T-cell (primary cell): ENCODE measurements at regions of chr6 and their contacts with region 1.

Region 1: GRCh38 chr6:149368065-149368464 is 32.0 kb upstream of the SUMO4 start:
- DNase-seq: no peak
- ATAC-seq: no peak
- H3K4me3 ChIP-seq: no peak overlapping the region
- H3K4me3 Mint-ChIP-seq: no peak overlapping the region
- H3K27ac ChIP-seq: no peak overlapping the region
- H3K27ac Mint-ChIP-seq: no peak overlapping the region
- H3K4me1 ChIP-seq: peaks cover 10 to 57% of the 10 kb centered on the region in 2 experiments
- H3K4me1 Mint-ChIP-seq: peaks cover 27 to 50% (median 49%) of the 10 kb centered on the region in 3 donors
- H3K27me3 ChIP-seq: no peaks in the 10 kb centered on the region
- H3K27me3 Mint-ChIP-seq: no peaks in the 10 kb centered on the region

Region 2: GRCh38 chr6:149389509-149390297 is 21.6 kb after region 1 on chr6:
- CTCF ChIA-PET with region 1: no interaction called
- POLR2A ChIA-PET with region 1: no interaction called
- DNase-seq: no peak
- ATAC-seq: no peak
- H3K4me3 ChIP-seq: no peak overlapping the region
- H3K4me3 Mint-ChIP-seq: no peak overlapping the region
- H3K27ac ChIP-seq: no peak overlapping the region
- H3K27ac Mint-ChIP-seq: peak overlapping the region in 1 of 2 donors; percentile 39
- H3K4me1 ChIP-seq: peaks cover 0 to 17% of the 10 kb centered on the region in 2 experiments
- H3K4me1 Mint-ChIP-seq: peaks cover 68 to 77% (median 72%) of the 10 kb centered on the region in 3 donors
- H3K27me3 ChIP-seq: no peaks in the 10 kb centered on the region
- H3K27me3 Mint-ChIP-seq: no peaks in the 10 kb centered on the region

Region 3: DNA sequence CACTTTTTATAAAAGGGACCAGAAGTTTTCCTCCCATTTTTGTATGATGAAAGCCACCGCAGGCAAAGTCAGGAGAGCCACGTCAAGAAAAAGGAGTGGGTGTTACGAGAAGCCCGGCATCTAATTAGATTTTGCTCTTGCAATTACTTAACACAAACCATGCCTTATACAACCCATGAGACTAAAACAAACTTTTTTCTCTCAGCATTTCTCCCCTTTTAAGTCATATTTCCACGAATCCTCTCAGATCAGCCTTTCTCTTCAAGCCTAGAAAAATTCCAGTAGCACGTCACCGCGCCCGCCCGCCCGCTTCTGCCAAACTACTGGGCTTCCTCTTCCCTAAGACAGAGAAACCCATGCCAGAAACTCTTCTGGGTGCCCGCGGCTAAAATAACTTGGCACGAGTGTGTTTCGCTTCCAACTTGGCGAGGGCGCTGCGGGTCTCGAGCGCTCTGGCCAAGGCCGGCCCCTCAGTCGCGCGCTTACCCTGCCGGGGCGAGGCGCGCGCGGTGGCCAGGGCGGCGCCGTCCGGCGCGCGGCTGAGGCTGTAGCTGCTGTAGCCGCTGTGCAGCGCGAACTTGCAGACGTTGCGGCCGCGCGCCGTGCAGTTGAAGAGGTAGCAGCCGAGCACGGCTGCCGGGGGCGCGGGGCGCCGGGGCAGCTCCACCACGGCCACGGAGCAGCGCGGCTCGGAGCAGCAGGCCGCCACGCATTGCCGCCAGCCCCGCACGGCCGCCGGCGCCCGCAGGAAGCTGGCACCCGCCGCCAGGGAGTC is 495.0 kb after region 1 on chr6:
- CTCF ChIA-PET with region 1: interaction called in 1 of 2 experiments, 10 read pairs
- POLR2A ChIA-PET with region 1: no interaction called
- DNase-seq: peak in 9 of 35 experiments; percentile 1 to 28 (median 7)
- ATAC-seq: peak; percentile 3 to 20 (median 12)
- H3K4me3 ChIP-seq: peak overlapping the region; percentile 34 to 63
- H3K4me3 Mint-ChIP-seq: peak overlapping the region; percentile 66 to 82 (median 77)
- H3K27ac ChIP-seq: no peak overlapping the region
- H3K27ac Mint-ChIP-seq: peak overlapping the region; percentile 28 to 34
- H3K4me1 ChIP-seq: peaks cover 0 to 17% of the 10 kb centered on the region in 2 experiments
- H3K4me1 Mint-ChIP-seq: peaks cover 0 to 16% (median 12%) of the 10 kb centered on the region in 3 donors
- H3K27me3 ChIP-seq: peaks cover 2 to 17% of the 10 kb centered on the region in 2 experiments
- H3K27me3 Mint-ChIP-seq: peaks cover 7 to 8% of the 10 kb centered on the region in 2 donors